Adrenal gland (tissue), 19 donors: ENCODE measurements at regions of chr19 and their contacts with region 1.

Region 1: DNA sequence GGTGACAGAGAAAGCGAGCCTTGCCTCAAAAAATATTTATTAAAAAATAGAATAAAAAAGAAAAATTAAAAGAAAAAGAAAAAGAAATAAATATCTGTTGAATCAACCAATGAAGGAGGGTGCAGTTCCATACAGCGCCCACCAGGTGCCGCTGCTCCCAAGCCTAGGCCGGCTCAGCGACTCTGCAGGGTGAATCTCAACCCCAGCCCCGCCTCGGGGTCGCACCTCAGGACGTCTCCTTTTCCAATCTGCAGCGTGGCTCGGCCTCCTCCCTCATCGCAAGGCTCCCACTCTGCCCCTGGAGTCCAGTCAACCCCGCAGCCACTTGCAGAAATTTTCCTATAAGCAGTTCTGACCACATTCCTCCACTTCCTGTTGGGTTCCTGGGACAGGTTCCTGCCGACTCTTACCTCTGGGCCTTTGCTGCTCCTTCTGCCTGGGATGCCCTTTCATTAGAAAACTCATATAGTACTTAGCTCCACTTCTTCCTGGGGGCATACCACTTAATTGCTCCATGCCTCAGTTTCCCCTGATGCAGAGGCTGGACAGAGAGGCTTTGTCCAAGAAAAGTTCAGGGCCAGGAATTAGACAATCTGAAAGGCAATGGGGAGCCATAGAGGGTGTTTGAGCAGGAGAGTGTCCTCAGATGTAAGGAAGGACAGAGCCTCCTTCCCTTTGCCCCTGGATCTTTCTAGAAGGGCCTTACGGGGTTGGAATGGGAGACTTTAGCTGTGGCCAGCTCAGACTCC is 24.3 kb downstream of the NFILZ start:
- DNase-seq: peak in 6 of 7 donors; percentile 32 to 58 (median 44)
- H3K4me3 ChIP-seq: no peak overlapping the region
- H3K27ac ChIP-seq: no peak overlapping the region
- H3K4me1 ChIP-seq: no peaks in the 10 kb centered on the region
- H3K27me3 ChIP-seq: peaks cover 5% of the 10 kb centered on the region
- CTCF ChIP-seq: peak; percentile 79 to 99 (median 96)
- POLR2A ChIP-seq: no peak

Region 2: GRCh38 chr19:8473648-8474476 is 180.9 kb before region 1 on chr19:
- intact Hi-C with region 1: no loop called
- DNase-seq: no peak
- H3K4me3 ChIP-seq: no peak overlapping the region
- H3K27ac ChIP-seq: no peak overlapping the region
- H3K4me1 ChIP-seq: peaks cover 32 to 56% of the 10 kb centered on the region in 2 donors
- H3K27me3 ChIP-seq: no peaks in the 10 kb centered on the region
- CTCF ChIP-seq: no peak
- POLR2A ChIP-seq: no peak

Region 3: DNA sequence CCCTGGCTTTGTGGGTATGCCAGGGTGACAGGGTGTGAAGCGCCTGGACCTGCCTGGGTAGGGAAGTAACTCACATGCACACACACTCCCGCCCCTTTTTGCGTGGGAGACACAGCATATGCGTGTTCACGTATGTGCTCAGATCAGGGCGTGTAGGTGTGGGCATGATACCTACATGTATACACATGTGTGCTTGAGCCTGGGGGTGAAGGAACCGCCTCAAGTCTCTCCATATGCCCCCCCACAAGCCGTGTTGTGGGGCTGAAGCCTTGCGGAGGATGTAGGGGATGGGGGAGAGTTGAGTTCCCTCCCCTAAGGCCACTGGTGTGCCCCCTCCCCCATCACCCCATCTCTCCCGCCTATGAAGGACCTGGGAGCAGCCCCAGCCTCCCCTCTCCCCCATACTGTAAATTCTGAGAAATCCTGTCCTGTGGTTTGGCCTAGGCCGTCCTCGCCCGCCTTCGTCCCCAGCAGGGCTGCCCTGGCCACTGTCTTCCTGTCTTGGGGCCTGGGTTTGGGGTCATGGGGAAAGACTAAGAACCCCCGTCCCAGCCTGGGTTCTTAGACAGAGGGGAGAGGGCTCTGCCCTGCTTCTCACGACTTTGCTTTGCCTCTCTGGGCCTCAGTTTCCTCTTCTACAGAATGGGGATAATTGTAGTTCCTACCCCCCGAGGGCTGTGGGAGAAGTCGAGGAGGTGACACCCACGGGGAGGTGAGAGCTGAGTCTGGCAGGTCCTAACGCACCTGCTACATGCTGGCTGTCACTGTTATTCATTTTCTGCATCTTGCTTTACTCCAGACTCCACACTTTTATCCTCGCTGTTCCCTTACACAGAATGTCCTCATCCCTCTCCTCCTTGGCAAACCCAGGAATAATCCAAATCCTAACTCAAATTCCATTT is 29.5 kb after region 1 on chr19:
- intact Hi-C with region 1: no loop called
- DNase-seq: no peak
- H3K4me3 ChIP-seq: no peak overlapping the region
- H3K27ac ChIP-seq: no peak overlapping the region
- H3K4me1 ChIP-seq: no peaks in the 10 kb centered on the region
- H3K27me3 ChIP-seq: no peaks in the 10 kb centered on the region
- CTCF ChIP-seq: no peak
- POLR2A ChIP-seq: no peak

Region 4: DNA sequence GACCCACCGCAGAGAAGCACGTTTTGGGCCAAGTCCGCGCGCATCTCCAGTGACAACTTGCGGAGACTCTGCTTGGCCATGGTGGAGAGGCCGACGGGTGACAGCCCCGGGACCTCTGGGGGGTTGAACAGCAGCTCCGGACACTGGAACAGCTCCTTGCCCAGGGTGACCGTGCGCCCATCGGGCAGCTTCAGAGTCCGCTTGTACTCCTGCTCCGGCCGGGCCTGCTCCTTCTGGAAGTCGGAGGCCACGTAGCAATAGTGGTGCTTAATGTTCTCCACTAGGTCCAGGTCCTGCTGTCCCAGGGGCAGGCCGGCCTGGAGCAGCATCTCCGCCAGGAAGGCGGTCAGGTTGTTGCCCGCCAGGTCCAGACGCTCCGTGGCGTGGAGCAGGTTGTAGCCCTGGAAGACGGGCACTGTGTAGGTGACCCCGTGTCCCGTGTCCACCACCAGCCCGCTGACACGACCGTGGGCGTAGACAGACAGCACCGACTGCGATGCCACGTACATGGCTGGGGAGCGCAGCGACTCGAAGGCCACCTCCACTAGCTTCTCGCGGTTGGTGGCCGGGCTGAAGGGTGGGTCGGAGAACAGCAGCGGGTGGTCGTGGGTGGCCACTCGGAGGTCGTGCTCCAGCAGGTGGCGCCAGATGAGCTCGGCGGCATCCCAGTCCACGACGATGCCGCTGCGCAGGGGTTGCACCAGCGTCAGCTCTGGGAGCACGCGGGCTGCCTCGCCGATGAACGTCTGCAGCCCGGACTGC is 43.1 kb after region 1 on chr19:
- intact Hi-C with region 1: loop called in 1 of 2 experiments (anchors 5 kb)
- DNase-seq: no peak
- H3K4me3 ChIP-seq: no peak overlapping the region
- H3K27ac ChIP-seq: no peak overlapping the region
- H3K4me1 ChIP-seq: no peaks in the 10 kb centered on the region
- H3K27me3 ChIP-seq: peaks cover 3% of the 10 kb centered on the region
- CTCF ChIP-seq: no peak
- POLR2A ChIP-seq: no peak

Region 5: GRCh38 chr19:9075064-9075949 is 420.5 kb after region 1 on chr19:
- intact Hi-C with region 1: loop called (anchors 2 to 10 kb)
- DNase-seq: peak; percentile 84 to 93 (median 90)
- H3K4me3 ChIP-seq: no peak overlapping the region
- H3K27ac ChIP-seq: no peak overlapping the region
- H3K4me1 ChIP-seq: peaks cover 0 to 5% of the 10 kb centered on the region in 2 donors
- H3K27me3 ChIP-seq: no peaks in the 10 kb centered on the region
- CTCF ChIP-seq: no peak
- POLR2A ChIP-seq: no peak